ENCODE measurements at regions of chr18 and their contacts with region 1.

Region 1: GRCh38 chr18:3245853-3246634 is 1.6 kb upstream of the MYL12A start:
- DNase-seq: peak; percentile 95
- H3K4me3 Mint-ChIP-seq: peak overlapping the region; percentile 98
- H3K27ac Mint-ChIP-seq: peak overlapping the region; percentile 95
- H3K4me1 Mint-ChIP-seq: peaks cover 44% of the 10 kb centered on the region
- H3K27me3 Mint-ChIP-seq: no peaks in the 10 kb centered on the region

Region 2: DNA sequence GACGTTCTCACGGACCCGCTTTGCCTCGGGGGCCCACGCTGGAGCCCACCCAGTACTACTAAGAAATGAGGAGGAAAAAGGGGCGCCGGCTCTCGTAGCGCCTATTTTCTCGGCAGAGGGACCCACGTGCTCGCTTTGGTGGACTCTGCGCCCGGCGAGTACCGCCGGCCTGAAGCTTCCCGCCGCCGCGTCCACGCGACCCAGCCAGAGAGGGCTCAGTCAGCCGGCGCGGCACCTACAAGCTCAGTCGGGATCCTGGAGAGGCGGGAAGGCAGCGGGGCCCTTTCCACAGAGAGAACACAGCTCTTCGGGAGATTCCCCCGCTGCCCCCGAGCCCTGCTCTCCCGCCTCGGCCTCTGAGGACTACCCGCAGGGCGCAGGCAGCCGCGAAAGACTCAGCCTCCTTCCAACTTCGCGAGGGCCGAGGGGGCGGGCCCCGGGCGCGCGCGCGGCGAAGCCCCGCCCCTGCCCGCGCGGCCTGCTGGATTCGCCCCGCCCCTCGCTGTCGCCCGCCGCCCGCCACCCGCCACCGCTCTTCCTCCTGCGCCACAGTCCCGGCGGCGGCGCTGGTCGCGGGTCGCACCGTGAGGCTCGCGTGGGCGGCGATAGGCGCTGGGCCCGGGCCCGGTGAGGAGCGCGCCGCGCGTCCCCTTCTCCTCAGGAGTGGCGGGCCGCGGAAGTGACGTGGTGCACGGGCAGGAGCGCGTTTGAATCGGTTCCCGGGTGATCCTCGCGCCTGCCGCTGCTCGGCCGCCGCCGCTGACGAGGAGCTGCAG is 590.7 kb before region 1 on chr18 and contains the start of gene SMCHD1:
- intact Hi-C with region 1: loop called (anchors 2 kb)
- DNase-seq: peak; percentile 96
- H3K4me3 Mint-ChIP-seq: peak within 1 kb of the TSS; percentile 94
- H3K27ac Mint-ChIP-seq: peak within 1 kb of the TSS; percentile 100
- H3K4me1 Mint-ChIP-seq: peaks cover 30% of the 10 kb centered on the region
- H3K27me3 Mint-ChIP-seq: no peaks in the 10 kb centered on the region
- total RNA-seq, gene SMCHD1: 98.4 and 109 TPM in 2 replicates

Region 3: GRCh38 chr18:2932247-2933181 is 313.5 kb before region 1 on chr18:
- intact Hi-C with region 1: loop called (anchors 1 kb)
- DNase-seq: peak; percentile 88
- H3K4me3 Mint-ChIP-seq: peak overlapping the region; percentile 6
- H3K27ac Mint-ChIP-seq: peak overlapping the region; percentile 92
- H3K4me1 Mint-ChIP-seq: peaks cover 35% of the 10 kb centered on the region
- H3K27me3 Mint-ChIP-seq: no peaks in the 10 kb centered on the region

Region 4: DNA sequence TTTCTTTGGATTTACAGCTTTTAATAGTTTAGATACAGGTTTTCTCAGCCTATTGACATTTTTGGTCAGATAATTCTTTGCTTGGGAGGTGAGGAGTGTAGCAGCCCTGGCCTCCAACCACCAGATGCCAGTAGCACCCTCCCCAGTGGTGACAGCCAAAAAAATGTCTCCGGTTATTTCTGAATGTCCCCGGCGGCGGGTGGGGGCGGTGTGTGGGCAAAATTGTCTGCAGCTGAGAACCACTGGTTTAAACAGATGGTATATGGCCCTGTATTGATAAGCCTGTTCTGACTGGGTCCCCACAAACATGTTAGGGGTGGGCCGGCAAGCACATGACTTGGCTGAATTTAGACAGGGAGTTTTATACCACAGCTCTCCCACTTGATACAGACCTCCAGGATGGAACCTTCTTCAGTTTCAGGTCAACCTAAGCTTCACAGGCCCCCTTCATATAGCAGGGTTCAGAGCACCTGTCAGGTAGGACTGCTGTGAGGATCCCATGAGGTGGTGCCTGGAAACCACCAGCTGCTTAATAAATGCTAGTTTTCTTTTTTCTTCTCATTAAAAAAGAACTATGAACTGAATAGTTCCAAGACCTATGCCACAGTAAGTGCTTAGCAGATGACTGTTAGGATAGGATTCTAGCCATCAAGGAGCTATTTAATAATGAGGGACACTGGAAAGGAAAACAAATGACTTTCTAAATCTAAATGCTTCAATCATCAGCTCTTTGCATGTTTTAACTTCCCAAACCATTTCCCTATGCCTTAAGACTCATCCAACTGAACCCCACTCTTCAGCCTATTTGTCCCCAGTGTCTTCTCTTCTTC is 251.2 kb before region 1 on chr18:
- intact Hi-C with region 1: loop called (anchors 2 kb)
- DNase-seq: peak; percentile 92
- H3K4me3 Mint-ChIP-seq: peak overlapping the region; percentile 75
- H3K27ac Mint-ChIP-seq: peak overlapping the region; percentile 93
- H3K4me1 Mint-ChIP-seq: peaks cover 76% of the 10 kb centered on the region
- H3K27me3 Mint-ChIP-seq: no peaks in the 10 kb centered on the region

Region 5: DNA sequence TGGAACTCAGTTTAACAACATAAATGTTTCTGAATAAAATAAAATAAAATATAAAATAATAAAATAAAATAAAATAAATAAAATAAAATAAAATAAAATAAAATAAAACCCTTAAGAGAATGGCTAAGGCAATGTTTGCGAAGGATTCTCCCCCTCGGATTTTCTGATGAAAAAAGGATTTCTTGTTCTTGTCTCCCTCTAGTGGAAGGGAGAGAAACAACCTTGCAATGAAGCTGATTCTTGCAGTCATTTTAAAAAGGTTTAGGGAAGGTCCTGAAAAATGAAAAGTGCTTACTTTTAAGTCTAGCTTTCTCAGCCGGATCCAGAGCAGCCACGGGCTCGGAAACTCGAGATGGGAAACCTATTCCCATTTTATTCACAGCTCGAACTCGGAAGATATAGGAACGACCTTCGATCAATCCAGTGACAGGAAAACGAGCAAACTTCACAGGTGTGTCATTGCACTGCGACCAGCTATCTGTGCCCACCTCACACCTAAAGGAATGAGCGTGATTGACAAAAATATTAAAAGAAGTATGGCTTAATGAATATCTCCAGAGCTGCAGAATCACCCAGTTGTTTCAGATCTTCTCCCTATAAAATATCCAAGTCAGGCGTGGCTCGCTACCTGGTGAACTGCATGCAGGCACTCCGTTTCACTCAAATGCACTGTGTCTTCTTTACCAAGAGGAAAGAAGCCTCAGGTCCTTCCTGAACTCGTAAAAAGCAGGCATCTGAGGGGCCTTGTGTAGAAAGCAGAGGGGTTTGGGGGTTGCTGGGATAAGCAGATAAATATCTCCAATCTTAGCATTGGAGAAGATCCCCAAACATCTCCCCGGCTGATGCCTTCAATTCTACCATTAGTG is 94.4 kb before region 1 on chr18:
- intact Hi-C with region 1: loop called (anchors 1 kb)
- DNase-seq: peak; percentile 64
- H3K4me3 Mint-ChIP-seq: no peak overlapping the region
- H3K27ac Mint-ChIP-seq: no peak overlapping the region
- H3K4me1 Mint-ChIP-seq: peaks cover 6% of the 10 kb centered on the region
- H3K27me3 Mint-ChIP-seq: peaks cover 6% of the 10 kb centered on the region

Region 6: GRCh38 chr18:3447895-3448837 is 202.1 kb after region 1 on chr18:
- intact Hi-C with region 1: loop called (anchors 1 kb)
- DNase-seq: peak; percentile 96
- H3K4me3 Mint-ChIP-seq: peak overlapping the region; percentile 96
- H3K27ac Mint-ChIP-seq: peak overlapping the region; percentile 99
- H3K4me1 Mint-ChIP-seq: peaks cover 35% of the 10 kb centered on the region
- H3K27me3 Mint-ChIP-seq: no peaks in the 10 kb centered on the region

Measured in activated CD4-positive, alpha-beta T cell treated with anti-CD3 and anti-CD28 coated beads, Interleukin-2, amount 10 ng/mL, durations not matched to agents 24 days and 14 days (primary cell).